ENCODE measurements at regions of chr14 and their contacts with region 1.

Region 1: DNA sequence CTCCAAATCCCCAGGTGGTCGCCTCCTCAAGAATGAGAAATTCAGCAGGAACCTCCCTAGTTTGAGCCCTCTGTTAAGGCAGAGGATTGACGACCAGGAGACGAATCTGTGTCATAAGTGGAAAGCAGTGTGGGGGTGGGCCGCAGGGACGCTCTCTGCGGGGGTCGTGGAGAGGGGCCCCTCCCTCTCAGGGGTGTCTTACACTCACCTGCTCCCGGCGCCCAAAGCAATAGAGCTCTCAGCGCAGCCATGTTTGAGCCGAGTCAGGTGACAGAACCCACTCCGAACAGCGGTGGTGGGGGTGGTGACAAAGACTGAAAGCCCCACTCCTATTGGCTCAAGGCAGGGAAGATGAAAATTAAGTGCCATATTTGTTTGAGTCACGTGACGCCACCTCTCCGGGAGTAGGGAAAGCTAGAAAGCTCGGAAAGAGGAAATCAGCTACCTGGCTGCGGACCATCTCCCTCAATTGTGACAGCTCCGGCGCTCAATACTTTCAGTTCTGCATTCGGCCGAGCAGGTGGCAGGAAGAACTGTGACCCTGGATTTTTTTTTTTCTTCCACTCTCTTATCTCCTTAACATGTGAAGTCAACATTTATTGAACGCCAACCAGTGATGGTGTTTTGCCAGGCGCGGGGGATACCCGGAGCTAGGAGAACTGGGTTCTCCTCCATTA is at the start of gene ZFYVE26:
- DNase-seq: peak; percentile 95
- ATAC-seq: peak; percentile 89
- H3K4me3 Mint-ChIP-seq: peak within 1 kb of the TSS; percentile 89
- H3K27ac Mint-ChIP-seq: peak within 1 kb of the TSS; percentile 92
- H3K4me1 Mint-ChIP-seq: peaks cover 45% of the 10 kb centered on the region
- H3K27me3 Mint-ChIP-seq: no peaks in the 10 kb centered on the region
- total RNA-seq, gene ZFYVE26: 13.0 to 14.2 TPM

Region 2: DNA sequence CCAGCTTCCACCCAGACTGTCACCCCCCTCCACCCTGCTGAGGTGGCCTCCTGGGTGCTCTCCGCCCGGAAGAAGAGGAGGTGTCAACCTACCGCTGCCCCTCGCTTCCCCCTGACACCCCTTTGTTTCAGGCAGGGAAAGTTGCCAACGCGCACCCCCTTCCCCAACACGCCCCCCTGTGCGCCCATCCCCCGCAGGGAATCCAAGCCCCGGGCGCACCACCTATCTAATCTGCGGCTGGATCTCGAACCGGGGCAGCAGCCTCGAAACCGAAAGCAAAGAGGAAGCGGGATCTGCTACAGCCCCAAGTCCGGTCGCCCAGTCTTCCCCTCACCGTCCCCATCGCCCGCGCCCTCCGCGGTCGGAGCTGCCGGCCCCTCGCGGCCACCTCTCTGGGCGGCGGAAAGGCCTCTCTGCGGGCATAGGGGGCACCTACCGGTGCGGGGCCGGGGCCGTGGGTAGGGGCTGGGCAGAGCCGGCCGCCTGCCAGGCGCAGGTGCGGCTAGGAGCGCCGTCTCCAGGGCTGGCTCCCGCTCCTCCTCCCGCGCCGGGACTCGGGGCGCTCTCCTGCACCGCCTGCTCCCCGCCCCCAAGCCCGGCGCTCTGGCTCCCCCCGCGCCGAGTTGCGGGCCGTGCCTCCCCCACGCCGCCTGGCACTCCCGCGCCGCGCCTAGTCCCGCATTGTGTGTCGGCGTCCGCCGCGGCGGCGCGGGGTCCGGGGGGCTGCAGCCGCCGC is 301.6 kb before region 1 on chr14:
- CTCF ChIA-PET with region 1: no interaction called
- POLR2A ChIA-PET with region 1: no interaction called
- intact Hi-C with region 1: no loop called
- DNase-seq: peak; percentile 54
- ATAC-seq: peak; percentile 65
- H3K4me3 Mint-ChIP-seq: peak overlapping the region; percentile 70
- H3K27ac Mint-ChIP-seq: peak overlapping the region; percentile 70
- H3K4me1 Mint-ChIP-seq: peaks cover 5% of the 10 kb centered on the region
- H3K27me3 Mint-ChIP-seq: no peaks in the 10 kb centered on the region

Region 3: GRCh38 chr14:67619446-67620216 is 196.8 kb before region 1 on chr14 and contains the start of gene ARG2:
- CTCF ChIA-PET with region 1: no interaction called
- POLR2A ChIA-PET with region 1: no interaction called
- intact Hi-C with region 1: loop called in 1 of 2 experiments (anchors 1 kb)
- DNase-seq: peak; percentile 99
- ATAC-seq: peak; percentile 88
- H3K4me3 Mint-ChIP-seq: peak within 1 kb of the TSS; percentile 77
- H3K27ac Mint-ChIP-seq: peak within 1 kb of the TSS; percentile 73
- H3K4me1 Mint-ChIP-seq: peaks cover 31% of the 10 kb centered on the region
- H3K27me3 Mint-ChIP-seq: peaks cover 8% of the 10 kb centered on the region
- total RNA-seq, gene ARG2: 11.9 TPM

Region 4: DNA sequence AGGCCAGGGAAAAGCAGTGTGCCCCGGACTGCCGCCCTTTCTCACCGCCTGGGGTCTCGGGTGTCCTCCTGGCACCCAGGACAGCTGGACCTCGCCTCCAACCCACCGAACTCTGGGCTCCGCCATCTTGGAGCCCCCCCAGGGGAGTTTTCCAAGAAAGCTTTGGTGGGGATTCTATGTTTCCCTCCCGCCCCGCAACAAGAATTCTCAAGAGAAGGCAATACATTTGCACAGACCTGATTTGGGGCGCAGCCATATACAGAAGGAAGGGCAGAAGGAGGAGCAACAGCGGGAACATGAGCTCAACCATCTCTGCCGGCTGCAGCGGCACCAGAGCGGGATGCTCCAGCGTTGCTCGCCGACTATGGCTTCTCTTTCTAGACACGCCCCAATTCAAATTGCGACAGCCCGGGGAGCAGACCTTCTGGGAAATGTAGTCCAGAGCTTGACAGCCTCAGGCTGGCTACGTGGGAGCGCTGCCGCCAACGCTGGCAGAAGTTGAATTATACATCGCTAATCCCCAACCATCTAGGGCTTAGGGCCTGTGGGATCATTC is 121.0 kb before region 1 on chr14 and contains the start of gene RDH11:
- CTCF ChIA-PET with region 1: no interaction called
- POLR2A ChIA-PET with region 1: no interaction called
- intact Hi-C with region 1: loop called (anchors 1 kb)
- DNase-seq: peak; percentile 92
- ATAC-seq: peak; percentile 88
- H3K4me3 Mint-ChIP-seq: peak within 1 kb of the TSS; percentile 91
- H3K27ac Mint-ChIP-seq: peak within 1 kb of the TSS; percentile 98
- H3K4me1 Mint-ChIP-seq: peaks cover 21% of the 10 kb centered on the region
- H3K27me3 Mint-ChIP-seq: no peaks in the 10 kb centered on the region
- total RNA-seq, gene RDH11: 72.0 to 75.6 TPM

Region 5: DNA sequence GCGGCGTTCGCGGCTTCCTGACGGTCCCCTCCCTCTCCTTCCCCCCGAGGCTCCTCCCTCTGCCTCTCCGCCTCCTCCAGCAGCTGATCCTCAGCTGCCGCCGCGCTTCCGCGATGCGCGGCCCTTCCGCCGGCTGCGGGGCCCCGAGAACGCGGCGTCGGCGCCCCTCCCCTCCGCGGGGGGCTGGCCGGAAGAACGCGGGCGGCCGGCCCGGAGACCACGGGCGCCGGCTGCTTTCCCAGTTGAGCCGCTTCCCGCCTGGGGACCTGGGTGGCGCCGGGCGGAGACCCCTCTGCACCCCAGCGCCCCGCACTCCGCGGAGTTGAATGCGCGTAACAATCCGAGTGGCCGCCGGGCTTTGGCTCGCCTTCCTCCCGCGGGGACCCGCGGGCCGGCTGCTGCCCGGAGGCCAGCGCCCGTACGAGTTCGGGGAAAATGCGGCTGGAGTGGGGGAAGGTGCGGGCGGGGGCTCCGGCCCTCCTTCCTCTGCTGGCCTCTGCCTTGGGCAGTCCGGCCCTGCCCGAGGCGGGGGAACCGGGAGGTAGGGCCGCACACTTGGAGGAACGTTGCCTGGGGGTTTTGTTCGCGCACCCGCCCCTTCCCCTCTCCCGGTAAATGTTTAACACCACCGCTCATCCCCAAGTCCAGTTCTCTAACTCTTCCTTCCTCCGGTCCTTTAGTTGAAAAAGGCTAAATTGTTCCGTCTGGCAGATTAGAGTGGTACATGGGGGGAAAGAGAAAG is 1336.8 kb after region 1 on chr14:
- CTCF ChIA-PET with region 1: no interaction called
- POLR2A ChIA-PET with region 1: no interaction called
- intact Hi-C with region 1: loop called in 1 of 2 experiments (anchors 2 kb)
- DNase-seq: peak; percentile 96
- ATAC-seq: peak; percentile 93
- H3K4me3 Mint-ChIP-seq: peak overlapping the region; percentile 83
- H3K27ac Mint-ChIP-seq: peak overlapping the region; percentile 81
- H3K4me1 Mint-ChIP-seq: peaks cover 30% of the 10 kb centered on the region
- H3K27me3 Mint-ChIP-seq: no peaks in the 10 kb centered on the region